Dorsolateral prefrontal cortex (tissue), 120 donors: ENCODE measurements at regions of chr16 and their contacts with region 1.

Region 1: DNA sequence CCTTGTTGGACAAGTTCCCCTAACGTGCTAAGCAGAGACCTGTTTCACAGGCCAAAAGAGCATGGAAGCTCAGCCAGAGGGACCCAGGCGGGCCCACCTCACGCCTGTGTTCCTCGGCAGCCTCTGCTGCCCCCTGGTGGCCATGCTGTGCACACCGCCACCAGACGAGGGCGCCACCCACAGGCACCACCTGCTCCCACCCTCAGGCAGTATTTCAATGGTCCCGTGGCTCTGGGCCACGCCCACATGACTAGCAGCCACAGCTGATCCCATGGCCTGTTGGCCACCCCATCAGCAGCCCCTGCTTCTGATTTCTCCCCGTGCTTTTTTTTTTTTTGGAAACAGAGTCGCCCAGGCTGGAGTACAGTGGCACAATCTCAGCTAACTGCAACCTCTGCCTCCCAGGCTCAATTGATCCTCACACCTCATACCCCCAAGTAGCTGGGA is 18.9 kb downstream of the MPG start:
- DNase-seq: peak; percentile 77 to 92 (median 85)
- H3K4me3 ChIP-seq: no peak overlapping the region
- H3K27ac ChIP-seq: peak overlapping the region in 28 of 59 donors; percentile 1 to 57 (median 31)
- H3K27me3 ChIP-seq: no peaks in the 10 kb centered on the region
- CTCF ChIP-seq: peak; percentile 94 to 100 (median 99)

Region 2: DNA sequence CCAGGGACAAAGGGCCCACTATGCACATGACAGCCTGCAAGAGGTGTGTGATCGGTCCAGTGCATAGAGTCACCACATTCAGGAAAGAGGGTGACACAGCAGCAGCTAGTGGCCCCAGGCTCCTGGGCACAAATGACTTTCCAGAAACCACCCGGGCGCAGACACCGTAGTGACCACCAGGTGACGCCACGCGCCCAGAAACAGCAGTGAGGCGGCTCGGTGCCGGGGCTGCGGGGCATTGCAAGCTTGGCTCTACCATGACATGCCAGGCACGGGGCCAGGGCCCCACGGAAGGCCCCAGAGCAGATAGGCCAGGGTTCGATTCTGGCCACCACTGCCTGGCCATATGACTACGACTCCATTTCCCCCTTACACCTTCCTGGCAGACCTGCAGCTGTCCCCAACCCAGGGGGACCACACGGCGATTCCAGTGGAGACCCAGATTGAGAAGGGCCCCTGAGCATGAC is 31.3 kb before region 1 on chr16:
- intact Hi-C with region 1: loop called (anchors 1 kb)
- DNase-seq: peak; percentile 81 to 91 (median 86)
- H3K4me3 ChIP-seq: no peak overlapping the region
- H3K27ac ChIP-seq: peak overlapping the region in 14 of 59 donors; percentile 3 to 79 (median 33)
- H3K27me3 ChIP-seq: no peaks in the 10 kb centered on the region
- CTCF ChIP-seq: peak; percentile 80 to 100 (median 96)